ENCODE measurements at regions of chr2 and their contacts with region 1.

Region 1: DNA sequence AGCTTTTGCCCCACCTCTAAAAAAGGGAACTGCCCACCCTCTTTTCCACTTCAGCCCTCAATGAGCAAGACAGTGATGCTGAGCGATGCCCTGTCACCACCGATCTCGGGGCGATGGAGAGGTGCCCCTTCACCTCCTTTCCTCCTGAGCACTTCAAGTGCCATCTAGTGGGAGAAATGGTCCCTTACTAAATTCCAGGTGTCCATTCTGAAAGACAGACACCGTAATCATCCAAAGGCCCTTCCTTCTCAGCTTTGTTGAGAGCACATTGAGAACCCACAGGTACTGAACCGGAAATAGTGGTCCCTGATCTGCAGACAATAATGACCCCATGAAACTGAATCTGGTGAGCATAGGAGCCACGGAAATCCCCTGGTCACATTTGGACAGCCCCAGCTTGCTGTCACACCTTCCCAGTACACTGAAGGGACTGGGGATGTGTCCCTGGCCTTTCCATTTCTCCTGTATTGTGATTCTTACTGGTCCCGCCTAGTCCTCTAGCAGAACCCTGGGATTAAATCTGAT is 38.5 kb downstream of the KCTD18 start:
- DNase-seq: no peak
- ATAC-seq: peak in 1 of 2 donors; percentile 25
- H3K4me3 ChIP-seq: no peak overlapping the region
- H3K27ac ChIP-seq: no peak overlapping the region
- H3K4me1 ChIP-seq: no peaks in the 10 kb centered on the region
- H3K27me3 ChIP-seq: no peaks in the 10 kb centered on the region

Region 2: DNA sequence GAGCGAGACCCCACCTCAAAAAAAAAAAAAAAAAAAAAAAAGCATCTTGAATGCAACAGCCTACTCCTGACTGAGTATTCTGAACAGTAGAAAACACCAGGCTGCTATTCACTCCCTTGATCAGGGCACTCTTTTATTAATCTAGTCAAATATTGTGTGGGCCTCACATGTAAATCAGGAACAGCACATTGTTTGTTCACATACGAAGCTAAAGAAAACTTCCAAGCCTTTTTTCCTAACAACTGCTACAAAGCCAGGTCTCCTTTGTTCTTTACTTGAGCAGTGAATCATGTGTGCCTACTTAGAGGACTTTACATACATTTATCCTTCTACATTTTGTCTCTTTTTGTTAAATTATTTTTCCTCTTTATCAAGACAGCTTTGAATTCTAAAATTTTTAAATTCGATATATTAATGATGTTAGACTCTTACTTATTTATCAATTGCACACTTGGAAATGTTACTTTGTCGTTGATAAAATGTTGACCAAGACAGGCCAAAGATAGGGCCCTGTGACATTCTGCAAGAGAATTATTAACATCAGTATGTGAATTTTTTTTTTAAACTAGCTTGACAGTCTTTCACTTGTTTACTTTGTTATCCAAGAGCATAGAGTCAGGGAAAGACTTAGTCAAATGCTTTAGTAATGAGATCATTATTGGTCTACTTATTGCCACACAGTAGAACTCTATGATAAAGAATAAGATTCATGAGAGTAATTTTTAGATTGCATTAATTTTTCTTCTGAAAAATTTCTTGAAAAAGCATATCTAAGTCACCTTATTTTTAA is 151.6 kb before region 1 on chr2:
- intact Hi-C with region 1: loop called in 1 of 4 experiments (anchors 10 kb)
- DNase-seq: no peak
- ATAC-seq: peak; percentile 42 to 53
- H3K4me3 ChIP-seq: no peak overlapping the region
- H3K27ac ChIP-seq: no peak overlapping the region
- H3K4me1 ChIP-seq: peaks cover 10% of the 10 kb centered on the region
- H3K27me3 ChIP-seq: no peaks in the 10 kb centered on the region

Region 3: GRCh38 chr2:200454927-200455801 is 16.2 kb before region 1 on chr2:
- intact Hi-C with region 1: no loop called
- DNase-seq: no peak
- ATAC-seq: peak; percentile 78 to 82
- H3K4me3 ChIP-seq: no peak overlapping the region
- H3K27ac ChIP-seq: peak overlapping the region; percentile 84
- H3K4me1 ChIP-seq: peaks cover 14% of the 10 kb centered on the region
- H3K27me3 ChIP-seq: no peaks in the 10 kb centered on the region